Breast epithelium (tissue), 4 donors: ENCODE measurements at regions of chr9 and their contacts with region 1.

Region 1: DNA sequence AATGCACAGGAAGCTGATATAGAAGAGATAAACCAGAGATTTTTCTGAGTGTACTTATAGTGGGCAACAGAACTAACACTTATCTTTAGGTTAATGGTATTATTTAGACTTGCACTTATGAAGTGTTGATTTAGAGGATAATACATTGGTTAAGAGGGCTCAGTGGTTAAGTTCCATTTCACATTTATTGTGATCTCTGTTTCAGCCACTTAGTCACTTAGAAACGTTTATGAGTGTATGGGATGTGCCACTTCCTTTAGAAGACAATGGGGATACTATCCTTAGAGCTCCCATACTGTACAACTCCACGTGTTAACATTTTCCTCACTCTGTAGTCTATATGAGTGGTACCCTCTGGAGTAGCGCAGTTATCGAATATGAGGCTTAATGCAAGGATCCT is 57.5 kb downstream of the PIP5K1B start:
- DNase-seq: no peak
- H3K4me3 ChIP-seq: no peak overlapping the region
- H3K27ac ChIP-seq: no peak overlapping the region
- H3K4me1 ChIP-seq: no peaks in the 10 kb centered on the region
- H3K27me3 ChIP-seq: no peaks in the 10 kb centered on the region
- CTCF ChIP-seq: no peak
- POLR2A ChIP-seq: no peak

Region 2: DNA sequence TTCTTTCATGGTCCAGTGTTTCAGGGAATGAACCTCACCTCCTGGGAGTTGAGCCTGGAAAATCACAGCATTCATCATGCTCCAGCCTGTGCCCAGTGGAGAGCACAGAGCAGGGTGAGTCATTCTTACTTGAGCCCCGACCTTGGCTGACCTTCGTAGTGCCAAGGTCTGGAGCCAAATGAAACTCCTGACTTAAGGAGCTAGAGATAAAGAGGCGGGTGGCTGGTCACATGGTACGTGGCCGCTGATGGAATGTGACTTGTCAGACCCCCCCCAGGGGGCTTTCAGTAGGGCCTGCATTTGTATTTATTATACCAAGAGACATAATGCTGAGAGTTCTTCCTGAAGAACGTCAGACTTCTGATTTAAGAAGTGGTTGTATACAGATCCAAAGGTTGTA is 72.5 kb before region 1 on chr9:
- intact Hi-C with region 1: loop called (anchors 10 kb)
- DNase-seq: no peak
- H3K4me3 ChIP-seq: no peak overlapping the region
- H3K27ac ChIP-seq: no peak overlapping the region
- H3K4me1 ChIP-seq: no peaks in the 10 kb centered on the region
- H3K27me3 ChIP-seq: no peaks in the 10 kb centered on the region
- CTCF ChIP-seq: no peak
- POLR2A ChIP-seq: no peak

Region 3: GRCh38 chr9:69719367-69719766 is 956.8 kb after region 1 on chr9:
- intact Hi-C with region 1: no loop called
- DNase-seq: no peak
- H3K4me3 ChIP-seq: no peak overlapping the region
- H3K27ac ChIP-seq: no peak overlapping the region
- H3K4me1 ChIP-seq: no peaks in the 10 kb centered on the region
- H3K27me3 ChIP-seq: no peaks in the 10 kb centered on the region
- CTCF ChIP-seq: no peak
- POLR2A ChIP-seq: no peak